ENCODE measurements at regions of chr12 and their contacts with region 1.

Region 1: GRCh38 chr12:79547735-79548609 is 142.8 kb downstream of the PAWR start:
- DNase-seq: no peak
- H3K4me3 ChIP-seq: no peak overlapping the region
- H3K27ac ChIP-seq: peak overlapping the region; percentile 83
- H3K4me1 ChIP-seq: peaks cover 18 to 42% of the 10 kb centered on the region in 2 donors
- H3K27me3 ChIP-seq: no peaks in the 10 kb centered on the region
- CTCF ChIP-seq: peak; percentile 24 to 80 (median 68)

Region 2: GRCh38 chr12:79681008-79681590 is 133.1 kb after region 1 on chr12:
- intact Hi-C with region 1: no loop called
- DNase-seq: no peak
- H3K4me3 ChIP-seq: no peak overlapping the region
- H3K27ac ChIP-seq: no peak overlapping the region
- H3K4me1 ChIP-seq: peaks cover 0 to 36% of the 10 kb centered on the region in 2 donors
- H3K27me3 ChIP-seq: no peaks in the 10 kb centered on the region
- CTCF ChIP-seq: no peak

Region 3: GRCh38 chr12:79776111-79776510 is 228.1 kb after region 1 on chr12:
- intact Hi-C with region 1: no loop called
- DNase-seq: no peak
- H3K4me3 ChIP-seq: no peak overlapping the region
- H3K27ac ChIP-seq: peak overlapping the region; percentile 8 to 49
- H3K4me1 ChIP-seq: peaks cover 0 to 3% of the 10 kb centered on the region in 2 donors
- H3K27me3 ChIP-seq: no peaks in the 10 kb centered on the region
- CTCF ChIP-seq: no peak

Region 4: GRCh38 chr12:80033448-80033847 is 485.5 kb after region 1 on chr12:
- intact Hi-C with region 1: loop called (anchors 5 kb)
- DNase-seq: peak in 1 of 2 donors; percentile 72
- H3K4me3 ChIP-seq: peak overlapping the region in 1 of 2 donors; percentile 24
- H3K27ac ChIP-seq: peak overlapping the region; percentile 59 to 61
- H3K4me1 ChIP-seq: peaks cover 0 to 19% of the 10 kb centered on the region in 2 donors
- H3K27me3 ChIP-seq: no peaks in the 10 kb centered on the region
- CTCF ChIP-seq: no peak

Region 5: GRCh38 chr12:81077686-81078441 is 1529.9 kb after region 1 on chr12 and contains the start of gene ACSS3:
- intact Hi-C with region 1: loop called (anchors 10 kb)
- DNase-seq: peak in 1 of 2 donors; percentile 78
- H3K4me3 ChIP-seq: peak within 1 kb of the TSS; percentile 72 to 96
- H3K27ac ChIP-seq: peak within 1 kb of the TSS; percentile 91 to 93
- H3K4me1 ChIP-seq: peaks cover 0 to 6% of the 10 kb centered on the region in 2 donors
- H3K27me3 ChIP-seq: no peaks in the 10 kb centered on the region
- CTCF ChIP-seq: no peak
- total RNA-seq, gene ACSS3: 11.6 TPM

Measured in ascending aorta (tissue), 2 donors.